HEK293 (cell line): ENCODE measurements at regions of chr3 and their contacts with region 1.

Region 1: DNA sequence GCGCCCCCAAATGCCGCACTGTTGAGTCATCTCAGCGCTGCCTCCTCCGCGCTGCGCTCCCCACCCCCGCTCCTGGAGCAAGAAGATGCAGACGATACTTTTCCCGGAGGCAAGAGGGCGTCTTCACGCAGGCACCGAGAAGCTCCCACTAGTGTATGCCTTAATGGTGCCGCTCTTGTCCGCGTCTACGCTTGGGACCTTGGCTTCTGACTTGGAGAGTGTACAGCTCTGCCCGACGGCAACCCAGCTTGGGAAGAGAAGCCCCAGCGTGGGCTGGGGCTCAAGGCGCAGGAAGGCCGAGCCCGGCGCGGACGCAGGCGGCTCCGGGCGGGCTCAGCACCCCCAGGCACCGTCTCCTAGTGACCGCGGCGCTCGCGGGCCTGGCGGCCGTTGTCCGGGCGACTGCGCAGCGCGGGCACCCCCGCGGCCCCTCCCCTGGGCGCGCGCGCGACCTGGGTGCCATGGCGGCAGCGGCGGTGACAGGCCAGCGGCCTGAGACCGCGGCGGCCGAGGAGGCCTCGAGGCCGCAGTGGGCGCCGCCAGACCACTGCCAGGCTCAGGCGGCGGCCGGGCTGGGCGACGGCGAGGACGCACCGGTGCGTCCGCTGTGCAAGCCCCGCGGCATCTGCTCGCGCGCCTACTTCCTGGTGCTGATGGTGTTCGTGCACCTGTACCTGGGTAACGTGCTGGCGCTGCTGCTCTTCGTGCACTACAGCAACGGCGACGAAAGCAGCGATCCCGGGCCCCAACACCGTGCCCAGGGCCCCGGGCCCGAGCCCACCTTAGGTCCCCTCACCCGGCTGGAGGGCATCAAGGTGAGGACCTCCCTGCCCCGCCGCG is at the start of gene P4HTM:
- H3K4me3 ChIP-seq: peak within 1 kb of the TSS; percentile 83
- H3K27ac ChIP-seq: peak within 1 kb of the TSS; percentile 82
- H3K4me1 ChIP-seq: no peaks in the 10 kb centered on the region
- CTCF ChIP-seq: peak; percentile 89

Region 2: GRCh38 chr3:49013755-49014628 is 24.0 kb after region 1 on chr3:
- CTCF ChIA-PET with region 1: interaction called, 20 read pairs
- POLR2A ChIA-PET with region 1: interaction called, 21 read pairs
- H3K4me3 ChIP-seq: no peak overlapping the region
- H3K27ac ChIP-seq: no peak overlapping the region; the same call in 1 of the 2 replicates
- H3K4me1 ChIP-seq: no peaks in the 10 kb centered on the region
- CTCF ChIP-seq: no peak

Region 3: GRCh38 chr3:49021813-49022687 is 32.0 kb after region 1 on chr3 and contains the start of gene NDUFAF3:
- CTCF ChIA-PET with region 1: interaction called, 13 read pairs
- POLR2A ChIA-PET with region 1: interaction called, 33 read pairs
- H3K4me3 ChIP-seq: peak within 1 kb of the TSS; percentile 92
- H3K27ac ChIP-seq: peak within 1 kb of the TSS; percentile 93
- H3K4me1 ChIP-seq: no peaks in the 10 kb centered on the region
- CTCF ChIP-seq: peak; percentile 99